ENCODE measurements at regions of chr6 and their contacts with region 1.

Region 1: GRCh38 chr6:44096612-44097011 is 30.6 kb downstream of the MRPL14 start:
- DNase-seq: peak; percentile 55 to 82 (median 65)
- H3K4me3 ChIP-seq: no peak overlapping the region
- H3K4me3 Mint-ChIP-seq: peak overlapping the region in 1 of 7 donors; percentile 15
- H3K27ac ChIP-seq: no peak overlapping the region
- H3K27ac Mint-ChIP-seq: peak overlapping the region in 3 of 8 donors; percentile 2 to 56 (median 28)
- H3K4me1 ChIP-seq: no peaks in the 10 kb centered on the region
- H3K4me1 Mint-ChIP-seq: peaks cover 3 to 4% (median 3%) of the 10 kb centered on the region in 3 donors
- H3K27me3 ChIP-seq: no peaks in the 10 kb centered on the region
- H3K27me3 Mint-ChIP-seq: peaks cover 0 to under 1% of the 10 kb centered on the region in 2 donors

Region 2: DNA sequence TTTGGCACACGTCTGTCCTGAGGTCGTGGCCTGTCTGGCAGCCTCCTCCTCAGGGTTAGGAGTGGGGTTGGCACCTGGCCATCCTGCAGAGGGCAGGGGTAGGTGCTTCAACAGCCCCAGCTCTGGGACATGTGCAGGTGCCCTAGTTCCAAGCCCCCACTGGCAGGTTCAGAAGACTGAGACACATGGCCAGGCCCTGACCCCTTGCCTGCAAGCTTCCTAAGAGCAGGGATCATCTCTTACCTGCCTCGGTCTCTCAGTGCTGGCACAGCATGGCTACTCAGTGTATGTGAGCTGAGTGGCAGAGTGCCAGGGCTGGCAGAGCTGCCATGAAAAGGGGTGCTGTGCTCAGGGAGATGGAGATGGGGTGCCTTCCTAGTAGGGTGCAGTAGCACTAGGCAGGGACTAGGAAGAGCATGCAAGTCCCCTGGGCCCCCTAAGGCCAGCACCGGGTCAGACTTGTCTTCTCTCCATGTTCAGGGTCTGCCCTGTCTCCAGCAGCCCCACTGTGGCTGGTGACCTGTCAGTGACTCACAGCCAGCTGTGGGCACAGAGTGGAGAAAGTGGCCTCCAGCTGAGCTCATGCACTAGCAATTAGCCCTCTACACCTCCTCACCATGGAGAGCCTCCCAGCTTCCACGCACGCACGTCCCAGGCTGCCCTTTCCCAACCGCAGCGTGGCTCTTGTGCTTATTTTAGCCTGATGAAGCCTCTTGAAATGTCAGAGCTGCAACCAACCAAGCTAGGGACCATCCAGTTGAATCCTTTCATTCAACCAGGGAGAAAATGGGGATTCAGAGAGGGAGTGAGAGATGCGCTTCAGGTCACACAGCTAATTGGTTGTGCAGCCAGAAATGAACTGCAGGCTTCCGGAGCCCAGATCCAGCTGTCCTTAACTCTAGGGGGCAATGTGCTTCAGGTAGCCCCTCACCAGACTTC is 85.9 kb before region 1 on chr6:
- CTCF ChIA-PET with region 1: no interaction called
- POLR2A ChIA-PET with region 1: no interaction called
- DNase-seq: no peak
- H3K4me3 ChIP-seq: no peak overlapping the region
- H3K4me3 Mint-ChIP-seq: no peak overlapping the region
- H3K27ac ChIP-seq: no peak overlapping the region
- H3K27ac Mint-ChIP-seq: no peak overlapping the region
- H3K4me1 ChIP-seq: no peaks in the 10 kb centered on the region
- H3K4me1 Mint-ChIP-seq: no peaks in the 10 kb centered on the region
- H3K27me3 ChIP-seq: peaks cover 3% of the 10 kb centered on the region
- H3K27me3 Mint-ChIP-seq: peaks cover 16 to 40% of the 10 kb centered on the region in 2 donors

Region 3: DNA sequence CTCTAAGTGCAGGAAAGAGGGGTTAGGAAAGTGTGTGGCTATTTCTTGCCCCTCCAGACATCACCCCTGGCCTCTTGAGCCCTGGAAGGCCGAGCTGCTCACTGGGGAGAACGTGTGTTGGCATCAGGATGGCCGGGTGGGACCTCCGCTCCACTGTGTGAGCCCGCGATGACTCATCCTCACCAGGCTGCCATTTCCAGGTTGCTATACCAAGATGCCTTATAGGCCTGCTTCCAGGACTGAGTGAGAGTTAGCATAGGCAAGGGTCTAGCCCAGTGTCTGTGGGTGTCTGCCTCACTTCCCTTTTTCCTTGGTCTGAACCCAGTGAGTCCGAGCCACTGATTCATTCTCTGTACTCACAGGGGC is 74.3 kb before region 1 on chr6:
- CTCF ChIA-PET with region 1: no interaction called
- POLR2A ChIA-PET with region 1: no interaction called
- DNase-seq: no peak
- H3K4me3 ChIP-seq: no peak overlapping the region
- H3K4me3 Mint-ChIP-seq: no peak overlapping the region
- H3K27ac ChIP-seq: no peak overlapping the region
- H3K27ac Mint-ChIP-seq: no peak overlapping the region
- H3K4me1 ChIP-seq: no peaks in the 10 kb centered on the region
- H3K4me1 Mint-ChIP-seq: no peaks in the 10 kb centered on the region
- H3K27me3 ChIP-seq: no peaks in the 10 kb centered on the region
- H3K27me3 Mint-ChIP-seq: peaks cover 16 to 55% of the 10 kb centered on the region in 2 donors

Region 4: DNA sequence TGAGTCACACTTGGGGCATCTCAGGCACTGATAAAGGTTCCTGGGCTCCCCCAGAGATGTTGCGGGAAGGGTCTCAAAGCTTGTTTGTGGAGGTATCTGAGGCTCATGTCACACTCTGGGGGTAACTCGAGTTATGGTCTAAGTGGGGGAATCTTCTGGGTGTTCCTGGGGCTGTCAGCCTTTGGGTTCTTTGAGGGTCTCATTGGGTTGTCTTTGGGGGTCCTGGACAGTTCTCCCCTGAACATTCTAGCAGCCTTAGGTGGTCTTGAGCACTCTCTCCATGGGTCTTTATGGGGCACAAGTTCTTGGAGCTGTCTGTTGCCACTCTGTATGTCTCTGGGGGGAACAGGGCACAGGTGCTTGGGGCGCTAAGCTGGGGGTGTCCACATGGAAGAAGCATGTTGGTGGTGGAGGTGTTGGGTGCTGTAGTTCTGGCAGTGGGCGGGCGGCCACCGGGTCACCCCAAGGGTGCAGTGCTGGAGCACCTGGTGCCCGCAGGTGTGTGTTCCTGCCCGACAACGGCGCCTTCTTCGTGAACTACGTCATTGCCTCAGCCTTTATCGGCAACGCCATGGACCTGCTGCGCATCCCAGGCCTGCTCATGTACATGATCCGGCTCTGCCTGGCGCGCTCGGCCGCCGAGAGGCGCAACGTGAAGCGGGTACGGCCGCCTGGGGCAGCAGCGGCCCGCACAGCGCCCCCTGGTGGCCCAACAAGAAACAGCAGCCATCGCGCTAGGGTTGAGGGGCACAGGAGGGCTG is 54.9 kb after region 1 on chr6:
- CTCF ChIA-PET with region 1: interaction called, 33 read pairs
- POLR2A ChIA-PET with region 1: no interaction called
- DNase-seq: peak; percentile 67 to 83 (median 71)
- H3K4me3 ChIP-seq: peak overlapping the region; percentile 26
- H3K4me3 Mint-ChIP-seq: peak overlapping the region in 2 of 7 donors; percentile 25 to 64
- H3K27ac ChIP-seq: no peak overlapping the region
- H3K27ac Mint-ChIP-seq: peak overlapping the region in 2 of 8 donors; percentile 45 to 52
- H3K4me1 ChIP-seq: peaks cover 4% of the 10 kb centered on the region
- H3K4me1 Mint-ChIP-seq: peaks cover 6 to 11% (median 7%) of the 10 kb centered on the region in 3 donors
- H3K27me3 ChIP-seq: no peaks in the 10 kb centered on the region
- H3K27me3 Mint-ChIP-seq: no peaks in the 10 kb centered on the region